Esophagus muscularis mucosa (tissue), 4 donors: ENCODE measurements at regions of chr2 and their contacts with region 1.

Region 1: DNA sequence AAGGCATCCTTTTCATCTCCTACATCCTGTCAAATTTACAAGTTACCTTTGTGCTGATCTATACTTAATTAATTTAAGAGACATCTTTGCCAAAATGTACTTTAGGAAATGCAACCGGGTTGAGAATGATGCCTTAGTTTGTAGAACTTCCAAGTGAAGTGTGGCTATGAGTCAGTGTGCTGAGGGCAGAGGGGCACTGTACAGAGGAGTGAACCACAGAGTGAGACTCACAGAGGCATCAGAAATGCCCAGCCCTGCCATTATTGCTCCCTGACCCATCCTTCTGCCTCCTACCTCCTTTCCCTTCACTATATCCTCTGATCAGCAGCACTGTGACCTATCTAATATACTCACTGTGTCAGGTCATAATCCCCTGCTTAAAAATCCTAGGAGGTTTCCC is 320.1 kb downstream of the LRRTM1 start:
- DNase-seq: no peak
- H3K4me3 ChIP-seq: no peak overlapping the region
- H3K27ac ChIP-seq: no peak overlapping the region
- H3K4me1 ChIP-seq: no peaks in the 10 kb centered on the region
- H3K27me3 ChIP-seq: no peaks in the 10 kb centered on the region
- CTCF ChIP-seq: no peak
- EP300 ChIP-seq: no peak
- POLR2A ChIP-seq: no peak

Region 2: DNA sequence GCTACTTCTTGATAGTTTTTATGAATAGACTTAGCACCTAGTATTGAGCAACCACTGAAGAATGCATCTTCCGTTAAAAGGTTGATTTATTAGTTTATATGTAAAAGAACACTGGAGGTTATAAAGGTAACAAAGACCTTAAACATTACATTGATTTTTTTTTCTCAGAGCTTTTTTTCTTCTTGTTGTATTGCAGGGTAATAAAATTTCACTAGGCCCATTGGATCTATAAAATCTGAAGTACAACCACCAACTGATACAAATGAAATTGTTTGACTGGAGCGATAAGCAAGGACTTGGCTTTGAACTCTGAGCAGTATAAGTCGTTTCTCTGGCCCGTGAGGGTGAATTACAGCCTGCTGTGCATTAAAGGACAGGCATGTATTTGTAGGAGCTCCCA is 24.0 kb before region 1 on chr2:
- intact Hi-C with region 1: loop called (anchors 1 kb)
- DNase-seq: no peak
- H3K4me3 ChIP-seq: no peak overlapping the region
- H3K27ac ChIP-seq: no peak overlapping the region
- H3K4me1 ChIP-seq: no peaks in the 10 kb centered on the region
- H3K27me3 ChIP-seq: no peaks in the 10 kb centered on the region
- CTCF ChIP-seq: no peak
- EP300 ChIP-seq: no peak
- POLR2A ChIP-seq: no peak